PC-3 (cell line): ENCODE measurements at regions of chr17 and their contacts with region 1.

Region 1: DNA sequence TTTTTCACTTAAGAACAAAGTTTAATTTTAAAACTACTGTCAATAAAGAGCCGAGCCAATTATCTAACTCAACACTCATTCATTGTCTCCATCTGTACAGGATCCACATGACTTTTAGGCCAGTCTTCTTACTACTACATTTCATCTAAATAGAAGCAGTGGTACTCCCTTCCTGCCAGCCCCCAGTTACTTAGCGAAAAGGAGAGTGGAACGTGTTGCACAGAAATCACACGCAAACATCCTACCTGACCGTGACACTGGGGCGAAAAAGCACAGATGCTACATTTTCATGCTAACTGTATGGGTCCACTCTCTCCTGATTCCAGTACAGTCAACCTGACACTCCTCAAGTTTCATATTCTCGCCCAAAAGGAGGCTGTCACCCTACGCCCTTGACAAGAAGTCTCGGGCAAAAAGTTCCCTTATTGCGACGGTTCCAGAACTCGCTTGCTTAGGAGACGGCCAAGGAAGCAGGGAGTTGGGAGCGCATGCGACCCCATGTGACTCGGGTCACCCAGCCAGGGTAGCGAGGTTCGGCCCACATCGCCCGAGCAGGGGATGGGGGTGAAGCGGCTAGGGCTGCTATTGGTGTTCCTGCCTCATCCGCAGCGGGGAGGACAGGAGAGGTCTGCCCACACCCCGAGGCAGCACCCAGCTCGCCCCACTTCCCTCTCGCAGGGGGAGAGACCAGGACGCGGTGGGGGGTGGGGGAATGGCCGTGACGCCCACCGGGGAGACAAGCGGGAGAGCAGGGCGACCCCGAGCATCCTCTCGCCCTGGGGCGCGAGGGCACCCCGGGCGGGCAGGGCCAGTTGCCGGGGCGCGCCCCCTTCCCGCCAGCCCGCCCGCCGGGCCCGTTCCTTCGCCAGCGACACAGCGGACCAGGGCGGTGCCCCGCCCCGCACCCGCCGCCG is 935 bp downstream of the GNA13 start:
- DNase-seq: peak; percentile 50
- ATAC-seq: peak; percentile 51
- H3K4me3 ChIP-seq: peak overlapping the region; percentile 85
- H3K27ac ChIP-seq: peak overlapping the region; percentile 88
- H3K4me1 ChIP-seq: peaks cover 16% of the 10 kb centered on the region
- H3K27me3 ChIP-seq: no peaks in the 10 kb centered on the region
- CTCF ChIP-seq: no peak

Region 2: GRCh38 chr17:64920026-64920418 is 135.6 kb before region 1 on chr17:
- CTCF ChIA-PET with region 1: interaction called, 11 read pairs
- POLR2A ChIA-PET with region 1: interaction called, 19 read pairs
- intact Hi-C with region 1: no loop called
- DNase-seq: peak; percentile 34
- ATAC-seq: peak; percentile 8
- H3K4me3 ChIP-seq: peak overlapping the region; percentile 79
- H3K27ac ChIP-seq: no peak overlapping the region
- H3K4me1 ChIP-seq: peaks cover 5% of the 10 kb centered on the region
- H3K27me3 ChIP-seq: no peaks in the 10 kb centered on the region
- CTCF ChIP-seq: no peak

Region 3: DNA sequence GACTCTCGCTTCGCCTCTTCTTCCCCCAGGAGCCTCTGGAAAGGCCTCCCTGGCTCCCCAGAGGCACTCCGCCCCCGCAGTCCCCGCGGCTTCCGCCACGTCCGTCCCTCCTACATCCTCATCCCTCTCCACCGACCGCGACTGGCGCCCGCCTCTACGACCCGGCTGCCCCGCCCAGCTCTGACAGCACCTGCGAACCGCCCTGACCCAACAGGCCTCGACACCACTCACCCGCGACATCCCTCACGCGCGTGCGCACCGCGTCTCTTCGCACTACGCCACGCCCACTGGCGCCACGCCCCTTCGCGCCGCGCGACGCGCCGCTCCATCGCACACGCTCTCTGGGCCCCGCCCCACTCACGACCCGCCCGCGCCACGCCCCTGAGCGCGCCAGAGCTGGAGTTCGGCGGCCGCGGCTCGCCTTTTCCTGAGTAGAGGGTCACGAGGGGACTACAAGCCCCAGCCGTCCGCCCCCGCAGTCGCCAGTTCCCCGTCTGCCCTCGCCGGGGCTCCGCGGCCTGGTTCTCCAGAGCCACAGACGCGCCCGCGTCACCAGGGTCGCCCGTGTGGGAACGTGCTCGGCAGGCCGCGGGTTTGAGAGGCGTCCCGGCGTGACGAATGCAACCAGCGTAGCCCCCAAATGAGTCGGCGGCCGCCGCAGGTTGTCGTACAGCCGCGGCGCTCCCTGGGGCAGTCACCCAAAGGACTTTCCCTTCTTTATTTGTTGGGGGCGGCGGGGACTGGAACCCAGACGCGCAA is 80.1 kb before region 1 on chr17:
- CTCF ChIA-PET with region 1: interaction called, 8 read pairs
- POLR2A ChIA-PET with region 1: no interaction called
- intact Hi-C with region 1: loop called (anchors 2 kb)
- DNase-seq: peak; percentile 99
- ATAC-seq: peak; percentile 94
- H3K4me3 ChIP-seq: peak overlapping the region; percentile 92
- H3K27ac ChIP-seq: peak overlapping the region; percentile 83
- H3K4me1 ChIP-seq: peaks cover 23% of the 10 kb centered on the region
- H3K27me3 ChIP-seq: no peaks in the 10 kb centered on the region
- CTCF ChIP-seq: no peak

Region 4: DNA sequence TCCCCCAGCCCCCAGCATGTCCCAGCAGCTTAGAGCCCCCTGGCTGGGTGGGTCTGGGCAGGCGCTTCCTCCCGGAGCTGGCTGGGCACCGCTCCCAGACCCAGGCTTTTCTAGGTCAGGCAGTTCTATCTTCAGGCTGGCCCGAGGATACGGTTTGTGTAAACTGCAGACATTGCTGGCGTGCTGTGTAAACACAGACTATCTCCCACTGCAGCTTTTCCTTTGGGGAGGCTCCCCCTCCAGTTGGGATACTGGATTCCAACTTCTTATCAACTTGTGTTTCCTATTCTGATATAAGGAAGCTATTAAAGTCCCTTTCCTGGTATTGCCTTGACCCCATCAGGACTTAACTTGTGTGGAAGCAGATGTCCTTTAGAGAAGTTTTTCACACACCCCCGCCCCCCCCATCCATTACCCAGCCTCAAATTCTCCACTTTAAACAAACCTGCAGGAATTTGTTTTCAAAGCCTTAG is 19.2 kb after region 1 on chr17:
- CTCF ChIA-PET with region 1: no interaction called
- POLR2A ChIA-PET with region 1: interaction called, 16 read pairs
- intact Hi-C with region 1: no loop called
- DNase-seq: no peak
- ATAC-seq: peak; percentile 35
- H3K4me3 ChIP-seq: no peak overlapping the region
- H3K27ac ChIP-seq: no peak overlapping the region
- H3K4me1 ChIP-seq: peaks cover 47% of the 10 kb centered on the region
- H3K27me3 ChIP-seq: no peaks in the 10 kb centered on the region
- CTCF ChIP-seq: no peak

Region 5: GRCh38 chr17:65100316-65101140 is 44.9 kb after region 1 on chr17:
- CTCF ChIA-PET with region 1: interaction called, 10 read pairs
- POLR2A ChIA-PET with region 1: interaction called, 38 read pairs
- intact Hi-C with region 1: loop called (anchors 2 kb)
- DNase-seq: peak; percentile 91
- ATAC-seq: peak; percentile 70
- H3K4me3 ChIP-seq: peak overlapping the region; percentile 76
- H3K27ac ChIP-seq: peak overlapping the region; percentile 92
- H3K4me1 ChIP-seq: peaks cover 44% of the 10 kb centered on the region
- H3K27me3 ChIP-seq: no peaks in the 10 kb centered on the region
- CTCF ChIP-seq: peak; percentile 92

Region 6: GRCh38 chr17:65137021-65137991 is 81.7 kb after region 1 on chr17 and contains the start of gene RGS9:
- CTCF ChIA-PET with region 1: interaction called, 6 read pairs
- POLR2A ChIA-PET with region 1: no interaction called
- intact Hi-C with region 1: loop called (anchors 2 kb)
- DNase-seq: peak; percentile 90
- ATAC-seq: peak; percentile 89
- H3K4me3 ChIP-seq: peak within 1 kb of the TSS; percentile 64
- H3K27ac ChIP-seq: no peak within 1 kb of the TSS
- H3K4me1 ChIP-seq: peaks cover 15% of the 10 kb centered on the region; the same call in 1 of the 2 replicates
- H3K27me3 ChIP-seq: no peaks in the 10 kb centered on the region
- CTCF ChIP-seq: peak; percentile 95
- total RNA-seq, gene RGS9: 2.7 and 3.4 TPM in 2 replicates